ENCODE measurements at regions of chrX and their contacts with region 1.

Region 1: GRCh38 chrX:124406294-124407014 is 60.1 kb downstream of the SH2D1A start:
- DNase-seq: peak in 1 of 2 donors; percentile 44
- H3K4me3 ChIP-seq: no peak overlapping the region
- CTCF ChIP-seq: no peak
- POLR2A ChIP-seq: no peak

Region 2: DNA sequence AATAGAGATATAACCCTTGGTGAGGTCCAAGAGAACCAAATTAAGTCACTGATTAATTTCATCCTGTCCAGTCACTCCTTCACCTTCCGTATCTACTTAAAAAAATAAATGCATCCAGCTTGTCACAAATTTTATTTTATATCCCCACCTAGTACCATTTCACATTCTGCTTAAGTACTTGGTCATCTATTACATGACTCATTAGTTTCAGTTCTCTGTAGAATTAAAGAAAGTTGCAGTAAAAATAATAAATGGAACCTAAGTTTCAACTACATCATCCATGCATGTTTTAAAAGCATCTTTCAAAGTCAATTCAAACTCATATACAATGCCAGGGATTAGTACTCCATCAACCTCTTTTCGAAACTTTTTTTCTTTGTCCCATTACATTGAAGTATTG is 70.1 kb after region 1 on chrX:
- intact Hi-C with region 1: no loop called
- DNase-seq: no peak
- H3K4me3 ChIP-seq: no peak overlapping the region
- CTCF ChIP-seq: no peak
- POLR2A ChIP-seq: no peak

Region 3: DNA sequence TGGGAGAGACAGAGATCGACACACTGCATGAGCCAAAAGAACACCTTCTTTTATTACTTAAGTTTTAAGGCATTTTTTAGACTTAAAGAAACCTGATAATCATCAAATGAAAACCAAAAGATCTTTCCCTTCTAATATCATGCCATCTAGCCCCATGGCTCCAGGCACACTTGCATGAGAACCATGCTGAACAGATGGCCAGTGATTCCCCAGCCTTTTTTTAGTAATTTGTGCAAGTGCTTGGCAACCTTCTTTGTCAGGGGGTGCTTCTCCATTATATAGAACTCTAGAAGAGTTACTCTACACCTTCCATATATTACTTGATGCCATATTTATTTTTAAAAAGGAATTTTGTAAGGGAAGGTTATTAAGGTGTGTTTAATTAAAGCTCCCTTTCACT is 731.1 kb after region 1 on chrX:
- intact Hi-C with region 1: loop called (anchors 5 kb)
- DNase-seq: no peak
- H3K4me3 ChIP-seq: no peak overlapping the region
- CTCF ChIP-seq: no peak
- POLR2A ChIP-seq: no peak